Head of caudate nucleus (tissue), 42 donors: ENCODE measurements at regions of chr10 and their contacts with region 1.

Region 1: DNA sequence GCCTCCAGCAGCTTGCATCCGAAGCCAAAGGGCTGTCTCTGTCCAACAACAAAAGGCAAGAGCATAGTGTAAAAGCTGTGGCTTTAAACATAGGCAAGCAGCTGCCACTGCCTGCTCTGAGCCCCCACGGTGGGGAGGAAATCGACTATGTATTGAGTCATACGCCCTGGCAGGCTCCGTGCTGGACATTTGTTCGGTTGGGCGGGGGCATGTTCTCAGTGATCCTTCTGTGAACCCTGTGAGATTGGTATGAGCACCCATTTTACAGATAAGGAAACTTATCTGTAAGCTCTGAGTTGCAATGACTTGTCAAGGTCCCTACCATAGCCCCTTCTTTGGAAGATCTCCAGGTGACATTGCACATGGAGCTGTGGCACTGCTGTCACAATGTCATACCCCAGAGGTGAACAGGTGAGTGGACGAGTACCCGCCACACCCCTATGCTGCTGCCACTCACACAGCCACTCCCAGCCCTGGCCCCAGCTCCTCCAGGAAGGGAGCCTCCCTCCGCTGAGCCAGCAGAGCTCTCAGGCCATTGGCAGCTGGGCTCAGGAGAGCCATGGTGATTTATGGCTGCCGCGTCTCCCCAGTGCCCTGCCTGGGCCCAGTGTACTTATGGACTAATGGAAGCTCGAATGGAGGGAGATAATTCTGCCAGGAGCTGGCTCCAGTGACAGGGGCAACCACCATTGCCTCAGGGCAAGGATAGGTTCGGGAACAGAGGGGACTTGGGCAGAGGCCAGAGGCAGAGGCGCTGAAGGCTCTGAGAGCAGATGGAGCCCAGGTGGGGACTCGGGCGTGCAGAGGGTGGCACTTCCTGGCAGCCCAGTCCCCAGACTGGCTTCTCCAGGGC is 43.7 kb downstream of the UNC5B start:
- DNase-seq: peak in 14 of 42 donors; percentile 30 to 83 (median 48)

Region 2: GRCh38 chr10:70982443-70982842 is 273.6 kb before region 1 on chr10:
- intact Hi-C with region 1: no loop called
- DNase-seq: no peak

Region 3: GRCh38 chr10:71010730-71011129 is 245.3 kb before region 1 on chr10:
- intact Hi-C with region 1: no loop called
- DNase-seq: no peak

Region 4: GRCh38 chr10:71212318-71213126 is 43.5 kb before region 1 on chr10 and contains the start of gene UNC5B:
- intact Hi-C with region 1: loop called (anchors 5 kb)
- DNase-seq: peak; percentile 73 to 97 (median 94)

Region 5: DNA sequence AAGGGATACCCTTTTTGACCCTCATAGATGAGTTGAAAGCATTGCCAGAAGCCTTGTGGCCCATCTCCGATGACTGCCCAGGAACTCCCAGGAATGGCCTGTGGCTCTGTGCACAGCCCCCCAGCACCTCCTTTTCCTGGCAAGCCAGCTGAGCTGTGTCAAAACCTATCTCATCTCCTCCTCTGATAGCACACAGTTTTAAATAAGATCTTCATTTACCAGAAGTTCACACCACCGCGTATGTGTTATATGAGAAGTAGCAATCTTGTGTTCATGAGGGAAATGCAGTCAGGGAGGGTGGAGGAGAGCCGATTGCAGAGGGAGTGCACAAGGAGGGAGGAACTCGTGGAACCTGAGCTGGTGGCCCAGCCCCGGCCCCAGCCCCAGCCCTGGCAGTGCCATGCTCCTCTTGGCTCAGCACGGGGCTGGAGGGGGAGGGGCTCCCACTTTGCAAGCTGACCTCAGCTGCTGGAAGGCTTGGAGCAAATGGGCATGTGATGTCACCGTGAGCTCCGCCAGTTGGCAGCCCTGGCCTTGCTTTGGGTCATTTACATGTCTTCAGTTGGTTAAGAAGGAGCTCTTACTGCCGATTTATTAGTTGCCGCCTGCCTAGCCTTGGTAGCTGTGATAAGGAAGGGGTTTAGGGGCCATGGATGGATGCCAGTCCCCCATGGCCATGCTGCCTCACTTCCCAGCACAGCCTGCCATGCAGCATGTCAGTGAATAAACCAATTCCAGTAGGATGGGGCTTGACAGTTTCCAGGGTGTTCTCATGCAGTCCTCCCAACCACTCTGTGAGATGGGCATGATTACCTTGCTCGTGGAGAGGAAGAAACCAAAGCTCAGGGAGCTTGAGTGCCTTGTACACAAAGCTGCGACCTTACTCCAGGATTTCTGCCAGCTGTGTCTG is 23.7 kb before region 1 on chr10:
- intact Hi-C with region 1: loop called (anchors 2 kb)
- DNase-seq: peak; percentile 88 to 99 (median 96)

Region 6: GRCh38 chr10:71343392-71343773 is 87.3 kb after region 1 on chr10:
- intact Hi-C with region 1: no loop called
- DNase-seq: peak in 13 of 42 donors; percentile 22 to 54 (median 39)